ENCODE measurements at regions of chr9 and their contacts with region 1.

Region 1: DNA sequence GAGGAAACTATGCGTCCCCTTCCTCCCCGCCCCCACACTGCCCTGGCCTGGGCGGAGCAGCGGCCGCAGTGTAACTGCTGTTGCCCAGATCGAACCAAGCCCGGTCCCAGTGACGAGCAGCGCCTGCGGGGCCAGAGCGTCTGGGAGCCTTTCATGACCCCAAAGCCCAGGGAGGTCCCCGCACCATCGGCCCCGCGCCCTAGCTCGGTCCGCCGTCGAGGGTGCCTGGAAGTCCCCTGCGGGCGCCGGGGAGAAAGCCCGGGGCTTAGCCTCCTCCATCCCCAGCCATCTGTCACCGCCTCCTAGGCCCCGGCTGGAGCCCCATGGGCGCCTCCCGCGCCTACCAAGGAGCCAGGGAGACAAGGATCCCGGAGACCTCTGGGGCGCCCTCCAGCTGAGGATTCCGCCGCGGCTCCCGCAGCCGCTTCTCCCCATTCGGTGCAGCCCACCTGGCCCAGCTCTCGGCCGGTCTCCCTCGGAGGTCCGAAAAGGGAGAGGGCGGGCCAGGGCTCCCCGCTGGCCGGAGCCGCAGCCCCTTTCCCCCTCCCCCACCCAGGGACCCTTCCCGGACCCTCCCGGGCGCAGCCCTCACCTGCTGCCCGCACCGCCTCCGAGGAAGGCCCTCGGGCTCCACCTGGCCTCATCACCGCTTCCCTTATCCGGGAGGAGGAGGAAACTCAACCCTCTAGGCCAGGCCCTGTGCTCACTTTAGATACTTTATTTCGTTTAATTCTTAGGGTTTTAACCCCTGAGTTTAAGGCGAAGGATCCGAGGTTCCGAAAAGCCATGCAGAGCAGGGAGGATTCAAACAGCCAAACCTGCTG is 45.6 kb downstream of the APTX start:
- DNase-seq: no peak
- ATAC-seq: no peak
- H3K4me3 ChIP-seq: no peak overlapping the region
- H3K4me3 Mint-ChIP-seq: no peak overlapping the region
- H3K27ac ChIP-seq: no peak overlapping the region
- H3K27ac Mint-ChIP-seq: no peak overlapping the region
- H3K4me1 ChIP-seq: no peaks in the 10 kb centered on the region
- H3K4me1 Mint-ChIP-seq: no peaks in the 10 kb centered on the region
- H3K27me3 ChIP-seq: no peaks in the 10 kb centered on the region
- H3K27me3 Mint-ChIP-seq: no peaks in the 10 kb centered on the region

Region 2: GRCh38 chr9:32968101-32969011 is 12.5 kb after region 1 on chr9:
- CTCF ChIA-PET with region 1: interaction called in 1 of 2 experiments, 11 read pairs
- POLR2A ChIA-PET with region 1: interaction called in 1 of 2 experiments, 5 read pairs
- DNase-seq: peak in 30 of 35 experiments; percentile 11 to 70 (median 40)
- ATAC-seq: no peak
- H3K4me3 ChIP-seq: no peak overlapping the region
- H3K4me3 Mint-ChIP-seq: no peak overlapping the region
- H3K27ac ChIP-seq: no peak overlapping the region
- H3K27ac Mint-ChIP-seq: no peak overlapping the region
- H3K4me1 ChIP-seq: no peaks in the 10 kb centered on the region
- H3K4me1 Mint-ChIP-seq: peaks cover 0 to 2% (median 2%) of the 10 kb centered on the region in 3 donors
- H3K27me3 ChIP-seq: no peaks in the 10 kb centered on the region
- H3K27me3 Mint-ChIP-seq: no peaks in the 10 kb centered on the region

Measured in T-cell (primary cell).